ENCODE measurements at regions of chr13 and their contacts with region 1.

Region 1: DNA sequence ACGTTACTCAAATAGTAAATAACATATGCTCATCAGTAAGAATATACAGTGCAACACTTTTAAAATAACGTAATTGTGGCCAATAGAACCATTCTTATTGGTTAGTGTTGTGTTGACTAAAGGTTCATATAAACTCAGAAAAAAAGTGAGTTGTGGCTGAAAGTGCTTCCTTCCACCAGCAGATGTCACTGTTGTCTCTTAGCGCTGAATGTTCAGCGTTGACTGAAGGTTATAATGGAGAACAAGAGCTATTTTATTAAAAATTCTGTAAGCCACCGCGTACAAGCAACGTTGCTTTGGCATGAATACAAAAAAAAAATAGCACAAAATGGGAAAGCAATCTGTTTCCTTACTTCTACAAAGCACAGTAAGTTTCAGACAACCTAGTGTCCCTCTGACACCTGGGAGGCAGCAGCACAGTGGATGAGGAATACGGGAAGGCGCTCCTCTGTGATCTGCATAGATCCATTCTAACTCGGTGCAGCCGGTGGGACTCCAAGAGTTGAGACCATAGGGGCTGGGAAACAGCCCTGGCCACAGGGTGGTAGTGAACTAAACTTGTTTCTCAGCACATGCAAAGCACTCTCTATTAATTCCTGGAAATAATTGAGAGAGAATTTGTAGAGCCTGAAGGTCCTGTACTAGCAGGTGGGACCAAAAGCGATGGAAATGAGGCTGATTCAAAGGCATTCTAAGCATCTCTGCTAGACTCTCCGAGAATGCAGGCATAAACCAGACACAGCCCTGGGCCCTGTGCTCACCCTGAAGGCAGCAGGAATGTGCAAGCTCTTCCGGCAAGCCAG is 24.0 kb upstream of the OXGR1 start:
- DNase-seq: no peak
- H3K4me3 Mint-ChIP-seq: no peak overlapping the region
- H3K27ac Mint-ChIP-seq: no peak overlapping the region
- H3K4me1 Mint-ChIP-seq: peaks cover 6% of the 10 kb centered on the region
- H3K27me3 Mint-ChIP-seq: peaks cover 35% of the 10 kb centered on the region

Region 2: GRCh38 chr13:97165502-97166425 is 147.5 kb after region 1 on chr13:
- intact Hi-C with region 1: no loop called
- DNase-seq: no peak
- H3K4me3 Mint-ChIP-seq: no peak overlapping the region
- H3K27ac Mint-ChIP-seq: no peak overlapping the region
- H3K4me1 Mint-ChIP-seq: no peaks in the 10 kb centered on the region
- H3K27me3 Mint-ChIP-seq: peaks cover 26% of the 10 kb centered on the region

Region 3: GRCh38 chr13:97798836-97799235 is 780.6 kb after region 1 on chr13:
- intact Hi-C with region 1: loop called (anchors 2 kb)
- DNase-seq: no peak
- H3K4me3 Mint-ChIP-seq: no peak overlapping the region
- H3K27ac Mint-ChIP-seq: no peak overlapping the region
- H3K4me1 Mint-ChIP-seq: no peaks in the 10 kb centered on the region
- H3K27me3 Mint-ChIP-seq: no peaks in the 10 kb centered on the region

Measured in activated T-helper 2 cell treated with anti-CD3 and anti-CD28 coated beads, Interferon-gamma antibody, Interleukin-2, Interleukin-4, amounts not matched to agents 10 μg/mL and 5 μg/mL and 100 μg/mL, durations not matched to agents 14 hours and 24 hours and 36 hours (primary cell).